Motor neuron (in vitro differentiated cells): ENCODE measurements at regions of chr22 and their contacts with region 1.

Region 1: DNA sequence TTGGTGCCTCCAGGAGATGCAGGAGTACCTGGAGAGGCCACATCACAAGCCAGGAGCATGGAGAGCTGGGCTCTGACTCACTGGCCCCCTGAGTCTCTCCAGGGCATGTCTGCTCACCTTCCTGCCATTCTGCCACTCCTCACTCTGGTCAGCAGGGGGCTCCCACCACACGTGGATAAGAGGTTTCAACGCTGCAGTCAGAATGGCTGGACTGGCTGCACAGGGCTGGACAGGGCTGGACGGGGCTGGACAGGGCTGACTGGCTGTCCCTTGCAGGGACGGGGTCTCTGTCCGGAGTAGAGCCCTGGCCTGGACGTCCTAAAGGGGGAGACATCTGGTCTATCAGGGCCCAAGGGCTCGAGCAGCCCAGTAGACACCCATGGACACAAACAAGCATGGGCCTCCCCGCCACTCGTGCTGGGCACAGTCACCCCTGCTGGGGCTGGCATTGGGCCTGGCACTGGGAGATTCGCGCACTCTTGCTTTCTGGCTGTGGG is 34.6 kb downstream of the CYTH4 start:
- ATAC-seq: peak; percentile 85 to 99 (median 90)
- H3K4me3 ChIP-seq: no peak overlapping the region
- H3K27ac ChIP-seq: no peak overlapping the region
- H3K4me1 ChIP-seq: peaks cover 11 to 19% of the 10 kb centered on the region in 2 donors

Region 2: GRCh38 chr22:37431801-37432707 is 115.1 kb after region 1 on chr22:
- in situ Hi-C with region 1: loop called in 1 of 9 experiments (anchors 10 kb)
- ATAC-seq: peak; percentile 9 to 86 (median 50)
- H3K4me3 ChIP-seq: no peak overlapping the region
- H3K27ac ChIP-seq: no peak overlapping the region
- H3K4me1 ChIP-seq: peaks cover 38 to 40% of the 10 kb centered on the region in 2 donors

Region 3: GRCh38 chr22:37457093-37457893 is 140.4 kb after region 1 on chr22:
- in situ Hi-C with region 1: loop called in 6 of 9 experiments (anchors 5 to 10 kb)
- ATAC-seq: peak; percentile 66 to 99 (median 77)
- H3K4me3 ChIP-seq: no peak overlapping the region
- H3K27ac ChIP-seq: no peak overlapping the region
- H3K4me1 ChIP-seq: peaks cover 27 to 28% of the 10 kb centered on the region in 2 donors

Region 4: DNA sequence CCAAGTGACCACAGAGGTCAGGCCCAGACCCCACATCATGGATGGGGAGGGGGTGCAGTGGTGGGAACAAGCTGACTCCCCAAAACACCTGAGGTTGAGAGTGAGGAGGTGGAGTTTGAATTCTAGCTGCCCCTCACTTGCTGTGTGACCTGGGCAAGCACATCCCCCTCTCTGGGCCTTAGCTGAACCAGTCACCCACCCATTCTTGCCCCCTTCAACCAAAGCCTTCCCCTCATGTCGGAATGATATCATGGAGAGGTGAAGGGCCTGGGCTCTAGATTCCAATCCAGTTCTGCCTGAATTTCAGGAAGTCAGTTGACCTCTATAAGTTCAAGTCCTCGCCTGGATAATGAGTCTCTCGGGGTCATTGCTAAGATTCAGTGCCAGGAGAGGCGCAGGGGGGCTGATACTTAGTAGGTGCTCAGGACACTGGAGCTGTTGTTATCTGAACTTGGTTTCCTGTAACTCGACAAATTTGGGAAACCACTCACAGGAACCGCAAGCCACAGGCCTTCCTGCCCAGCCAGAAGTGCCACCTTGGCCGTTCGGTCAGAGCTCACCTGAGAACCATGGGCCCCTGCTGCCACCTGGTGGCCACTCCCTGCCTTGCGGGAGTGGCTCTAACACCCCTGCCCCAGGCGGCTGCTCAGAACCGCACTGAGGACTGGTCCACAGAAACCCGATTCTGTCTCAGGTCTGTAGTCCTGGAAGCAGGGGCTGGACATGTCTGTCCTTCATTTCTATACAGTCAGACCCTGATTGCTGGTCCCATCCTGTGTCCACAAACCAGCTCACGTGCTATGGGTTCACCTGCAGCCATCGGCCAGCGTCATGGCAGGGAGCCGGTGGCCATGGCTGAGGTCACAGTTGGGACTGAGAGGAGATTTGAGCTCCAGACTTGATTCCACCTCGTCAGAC is 250.2 kb after region 1 on chr22:
- in situ Hi-C with region 1: loop called in 1 of 9 experiments (anchors 10 kb)
- ATAC-seq: peak; percentile 18 to 90 (median 70)
- H3K4me3 ChIP-seq: no peak overlapping the region
- H3K27ac ChIP-seq: no peak overlapping the region
- H3K4me1 ChIP-seq: peaks cover 5 to 21% of the 10 kb centered on the region in 2 donors